A549 (cell line): ENCODE measurements at regions of chr3 and their contacts with region 1.

Region 1: GRCh38 chr3:89013536-89013935 is 93.9 kb upstream of the EPHA3 start:
- DNase-seq: no peak
- ATAC-seq: no peak
- H3K4me3 ChIP-seq: no peak overlapping the region
- H3K27ac ChIP-seq: no peak overlapping the region
- H3K4me1 ChIP-seq: no peaks in the 10 kb centered on the region
- CTCF ChIP-seq: no peak
- EP300 ChIP-seq: no peak
- POLR2A ChIP-seq: no peak
- RAD21 ChIP-seq: no peak

Region 2: GRCh38 chr3:88986834-88987233 is 26.7 kb before region 1 on chr3:
- CTCF ChIA-PET with region 1: no interaction called
- POLR2A ChIA-PET with region 1: interaction called, 16 read pairs
- DNase-seq: no peak
- ATAC-seq: no peak
- H3K4me3 ChIP-seq: no peak overlapping the region
- H3K27ac ChIP-seq: no peak overlapping the region
- H3K4me1 ChIP-seq: no peaks in the 10 kb centered on the region
- CTCF ChIP-seq: no peak
- EP300 ChIP-seq: no peak
- POLR2A ChIP-seq: no peak
- RAD21 ChIP-seq: no peak

Region 3: GRCh38 chr3:89032346-89033013 is 18.9 kb after region 1 on chr3:
- CTCF ChIA-PET with region 1: no interaction called
- POLR2A ChIA-PET with region 1: no interaction called
- DNase-seq: no peak
- ATAC-seq: no peak
- H3K4me3 ChIP-seq: no peak overlapping the region
- H3K27ac ChIP-seq: no peak overlapping the region
- H3K4me1 ChIP-seq: no peaks in the 10 kb centered on the region
- CTCF ChIP-seq: no peak
- EP300 ChIP-seq: no peak
- POLR2A ChIP-seq: no peak
- RAD21 ChIP-seq: no peak